Transverse colon (tissue), 4 donors: ENCODE measurements at regions of chr10 and their contacts with region 1.

Region 1: GRCh38 chr10:71771821-71772617 is 1.3 kb downstream of the VSIR start:
- DNase-seq: peak; percentile 69
- H3K4me3 ChIP-seq: peak overlapping the region; percentile 58 to 86 (median 75)
- H3K27ac ChIP-seq: peak overlapping the region; percentile 91 to 98 (median 94)
- H3K4me1 ChIP-seq: peaks cover 50 to 75% (median 64%) of the 10 kb centered on the region in 4 donors
- H3K27me3 ChIP-seq: no peaks in the 10 kb centered on the region
- CTCF ChIP-seq: no peak
- EP300 ChIP-seq: no peak
- POLR2A ChIP-seq: peak; percentile 42

Region 2: DNA sequence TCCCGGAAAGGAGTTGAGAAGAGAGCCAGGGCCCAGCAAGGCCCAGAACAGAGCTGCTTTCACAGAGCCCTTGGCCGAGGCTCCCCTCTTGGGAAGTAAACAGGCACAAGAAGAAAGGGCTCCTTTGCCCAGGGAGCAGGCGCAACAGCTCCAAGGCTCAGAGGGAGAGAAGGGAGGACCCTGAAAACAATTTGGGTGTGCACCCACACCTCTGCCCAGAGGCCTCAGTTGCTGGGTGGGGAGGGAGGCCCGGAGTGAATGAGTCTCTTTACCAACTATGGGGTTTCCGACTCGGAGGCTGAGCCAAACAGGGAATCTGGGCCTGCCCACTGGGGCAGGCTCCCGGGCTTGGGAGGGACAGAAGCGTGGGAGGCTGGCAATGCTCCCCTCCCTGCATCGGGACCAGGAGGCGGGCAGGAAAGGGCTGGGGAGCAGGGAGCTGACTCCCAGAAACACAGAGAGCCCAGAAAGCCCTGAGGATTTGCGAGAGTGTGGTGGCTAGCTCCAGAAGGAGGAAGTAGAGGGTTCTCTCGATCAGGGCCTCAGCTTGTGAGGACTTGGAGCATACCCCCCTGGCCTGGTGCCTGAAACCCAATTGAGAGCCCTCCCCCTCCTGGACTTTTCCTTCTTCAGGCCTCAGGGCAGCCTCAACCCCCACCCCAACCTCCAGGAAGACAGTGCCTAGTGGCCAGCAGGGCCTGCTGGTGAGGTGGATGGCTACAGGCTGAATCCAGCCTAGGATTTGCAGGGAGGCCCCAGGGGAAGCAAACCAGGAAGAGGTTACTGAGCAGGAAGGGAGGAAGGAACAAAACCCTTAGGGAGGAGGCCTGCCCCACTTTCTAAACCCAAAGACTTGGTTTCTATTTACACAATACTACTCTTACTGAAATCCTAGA is 58.6 kb before region 1 on chr10:
- in situ Hi-C with region 1: loop called in 1 of 4 experiments (anchors 10 kb)
- intact Hi-C with region 1: loop called (anchors 5 kb)
- DNase-seq: peak; percentile 69
- H3K4me3 ChIP-seq: no peak overlapping the region
- H3K27ac ChIP-seq: peak overlapping the region; percentile 80 to 93 (median 86)
- H3K4me1 ChIP-seq: peaks cover 28 to 39% (median 29%) of the 10 kb centered on the region in 4 donors
- H3K27me3 ChIP-seq: no peaks in the 10 kb centered on the region
- CTCF ChIP-seq: peak in 2 of 5 experiments; percentile 23 to 28
- EP300 ChIP-seq: no peak
- POLR2A ChIP-seq: no peak

Region 3: GRCh38 chr10:71727738-71728737 is 44.0 kb before region 1 on chr10:
- in situ Hi-C with region 1: loop called in 1 of 4 experiments (anchors 10 kb)
- intact Hi-C with region 1: no loop called
- DNase-seq: peak; percentile 89
- H3K4me3 ChIP-seq: no peak overlapping the region
- H3K27ac ChIP-seq: peak overlapping the region; percentile 82 to 92 (median 86)
- H3K4me1 ChIP-seq: peaks cover 32 to 43% (median 42%) of the 10 kb centered on the region in 4 donors
- H3K27me3 ChIP-seq: no peaks in the 10 kb centered on the region
- CTCF ChIP-seq: no peak
- EP300 ChIP-seq: no peak
- POLR2A ChIP-seq: no peak

Region 4: GRCh38 chr10:71963756-71964668 is 192.0 kb after region 1 on chr10 and contains the start of gene CHST3:
- in situ Hi-C with region 1: no loop called
- intact Hi-C with region 1: loop called (anchors 5 kb)
- DNase-seq: peak; percentile 42
- H3K4me3 ChIP-seq: peak within 1 kb of the TSS; percentile 46 to 64 (median 56)
- H3K27ac ChIP-seq: peak within 1 kb of the TSS; percentile 86 to 96 (median 89)
- H3K4me1 ChIP-seq: peaks cover 0 to 27% (median 11%) of the 10 kb centered on the region in 4 donors
- H3K27me3 ChIP-seq: peaks cover 29% of the 10 kb centered on the region
- CTCF ChIP-seq: no peak
- EP300 ChIP-seq: no peak
- POLR2A ChIP-seq: no peak
- total RNA-seq, gene CHST3: 1.6 to 10.5 (median 3.9) TPM